ENCODE measurements at regions of chr5 and their contacts with region 1.

Region 1: GRCh38 chr5:88384886-88385285 is 116.2 kb upstream of the TMEM161B start:
- DNase-seq: no peak
- ATAC-seq: no peak
- H3K4me3 ChIP-seq: no peak overlapping the region
- H3K27ac ChIP-seq: no peak overlapping the region
- H3K4me1 ChIP-seq: no peaks in the 10 kb centered on the region
- H3K27me3 ChIP-seq: no peaks in the 10 kb centered on the region
- CTCF ChIP-seq: no peak
- EP300 ChIP-seq: no peak
- POLR2A ChIP-seq: no peak
- RAD21 ChIP-seq: no peak

Region 2: GRCh38 chr5:88396751-88397281 is 11.9 kb after region 1 on chr5:
- CTCF ChIA-PET with region 1: interaction called, 3 read pairs
- POLR2A ChIA-PET with region 1: no interaction called
- RAD21 ChIA-PET with region 1: no interaction called
- SMC1A ChIA-PET with region 1: interaction called, 23 read pairs
- in situ Hi-C with region 1: no loop called
- intact Hi-C with region 1: no loop called
- DNase-seq: no peak
- ATAC-seq: no peak
- H3K4me3 ChIP-seq: no peak overlapping the region
- H3K27ac ChIP-seq: no peak overlapping the region
- H3K4me1 ChIP-seq: no peaks in the 10 kb centered on the region
- H3K27me3 ChIP-seq: no peaks in the 10 kb centered on the region
- CTCF ChIP-seq: no peak
- EP300 ChIP-seq: no peak
- POLR2A ChIP-seq: no peak
- RAD21 ChIP-seq: no peak